ENCODE measurements at regions of chr10 and their contacts with region 1.

Region 1: DNA sequence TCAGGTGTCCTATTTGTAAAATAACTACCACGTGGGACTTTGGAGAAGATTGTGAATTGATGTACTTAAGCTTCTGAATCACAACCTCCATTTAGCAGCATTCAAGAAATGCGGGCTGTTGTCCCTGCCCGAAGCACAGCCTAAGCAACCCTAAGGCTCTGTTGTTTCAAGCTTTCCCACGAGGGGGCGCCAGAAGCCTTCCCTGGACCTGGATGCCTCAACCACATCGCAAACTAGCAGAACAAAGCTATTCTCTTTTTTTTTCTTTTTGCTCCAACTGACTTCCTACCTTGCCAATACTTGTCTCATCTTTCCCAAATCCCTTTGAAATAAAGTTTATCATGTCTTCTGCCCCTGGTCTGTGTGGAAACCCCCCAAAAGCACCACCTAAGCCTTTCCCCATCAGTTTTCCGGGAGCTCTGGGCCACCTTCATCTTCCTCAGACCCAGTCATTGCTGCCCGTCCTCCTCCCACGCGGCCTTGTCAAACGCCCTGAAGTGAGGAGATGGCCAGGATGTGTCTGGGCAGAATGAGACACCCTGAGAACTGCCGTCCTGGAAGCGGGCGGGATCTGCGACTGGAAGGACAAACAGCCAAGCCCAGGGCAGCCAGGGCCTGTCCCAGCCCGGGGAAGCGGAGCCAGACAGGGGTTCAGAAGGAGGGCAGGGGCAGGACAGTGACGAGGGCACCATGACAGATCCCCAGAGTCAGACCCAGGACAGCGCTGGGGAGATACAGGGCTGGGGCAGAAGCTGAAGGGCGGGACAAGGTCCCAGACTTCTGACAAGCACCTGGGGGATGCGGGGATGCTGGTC is 112.7 kb downstream of the SLIT1 start:
- DNase-seq: peak; percentile 79
- H3K4me3 Mint-ChIP-seq: no peak overlapping the region
- H3K27ac Mint-ChIP-seq: no peak overlapping the region
- H3K4me1 Mint-ChIP-seq: peaks cover 5% of the 10 kb centered on the region
- H3K27me3 Mint-ChIP-seq: peaks cover 35% of the 10 kb centered on the region
- CTCF ChIP-seq: peak; percentile 94

Region 2: DNA sequence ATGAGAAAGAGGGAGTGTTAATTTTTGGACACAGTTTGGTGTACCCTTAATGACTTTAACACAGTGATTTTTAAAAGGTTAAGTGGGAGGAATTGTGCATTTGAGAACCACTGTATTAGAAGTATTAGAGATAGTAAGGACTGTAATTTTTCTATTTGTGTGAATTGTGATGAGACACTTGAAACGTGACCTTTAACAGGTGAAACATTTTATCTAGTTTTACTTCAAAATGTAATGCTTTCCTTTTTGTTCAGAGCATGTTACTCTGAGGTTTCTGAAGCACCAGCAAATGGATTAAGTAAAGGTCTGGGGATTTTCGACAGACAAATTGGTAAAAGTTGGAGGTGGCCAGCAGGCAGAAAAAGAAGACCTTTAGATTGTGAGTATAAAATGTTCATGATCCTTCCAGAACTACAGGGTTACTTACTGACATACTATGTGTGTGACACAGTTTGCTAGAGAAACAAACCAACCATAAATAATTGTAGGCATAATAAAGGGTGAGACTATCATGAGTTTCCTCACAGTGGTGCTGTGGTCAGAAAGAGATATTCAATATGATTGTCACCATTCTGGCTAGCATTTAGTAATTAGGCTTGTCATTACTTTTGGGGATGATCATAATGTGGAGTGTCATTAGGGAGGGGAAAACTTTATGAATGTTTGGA is 214.9 kb before region 1 on chr10:
- CTCF ChIA-PET with region 1: no interaction called
- POLR2A ChIA-PET with region 1: no interaction called
- intact Hi-C with region 1: no loop called
- DNase-seq: no peak
- H3K4me3 Mint-ChIP-seq: no peak overlapping the region
- H3K27ac Mint-ChIP-seq: peak overlapping the region; percentile 70
- H3K4me1 Mint-ChIP-seq: peaks cover 24% of the 10 kb centered on the region
- H3K27me3 Mint-ChIP-seq: no peaks in the 10 kb centered on the region
- CTCF ChIP-seq: no peak

Region 3: DNA sequence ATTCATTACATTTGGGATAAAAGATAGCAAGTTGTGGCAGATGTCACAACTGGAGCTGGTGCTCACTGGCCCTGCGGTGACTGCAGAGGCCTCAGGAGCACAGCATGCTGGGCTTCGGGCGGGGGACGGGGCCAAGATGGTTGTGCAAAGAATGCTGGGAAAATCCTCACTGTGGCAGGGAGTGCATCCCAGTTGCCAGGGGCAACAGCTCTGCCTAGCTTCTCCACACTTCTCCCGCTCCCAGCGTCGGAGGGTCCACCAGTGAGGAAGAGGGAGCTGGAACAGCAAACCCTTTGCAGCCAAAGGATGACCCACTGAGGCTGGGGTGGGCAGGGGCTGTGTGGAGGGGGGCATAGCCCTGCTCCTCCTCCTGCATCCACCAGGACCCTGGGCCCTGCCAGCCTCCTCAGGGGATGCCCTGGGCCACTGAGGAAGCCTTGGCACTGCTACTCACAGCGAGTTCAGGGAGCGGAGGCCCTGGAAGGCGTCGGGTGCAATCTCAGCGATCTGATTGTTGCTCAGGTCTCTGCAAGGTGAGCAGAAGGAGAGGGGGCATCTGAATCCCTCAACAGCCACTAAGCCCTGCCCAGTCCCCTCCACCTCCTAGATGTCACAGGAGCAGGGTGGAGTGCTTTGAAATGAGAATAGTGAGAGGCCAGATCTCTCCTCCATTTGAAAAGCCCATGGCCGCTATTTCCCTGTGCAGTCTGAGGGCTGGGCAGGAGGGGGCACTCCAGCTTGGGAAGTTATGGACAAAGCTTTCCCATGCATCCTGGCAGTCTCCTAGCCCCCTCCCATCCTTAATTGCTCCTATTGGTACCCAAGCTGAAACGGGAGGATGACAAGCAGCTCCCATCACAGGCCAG is 13.8 kb before region 1 on chr10:
- CTCF ChIA-PET with region 1: interaction called, 19 read pairs
- POLR2A ChIA-PET with region 1: no interaction called
- intact Hi-C with region 1: no loop called
- DNase-seq: no peak
- H3K4me3 Mint-ChIP-seq: no peak overlapping the region
- H3K27ac Mint-ChIP-seq: no peak overlapping the region
- H3K4me1 Mint-ChIP-seq: peaks cover 6% of the 10 kb centered on the region
- H3K27me3 Mint-ChIP-seq: peaks cover 7% of the 10 kb centered on the region
- CTCF ChIP-seq: no peak

Region 4: DNA sequence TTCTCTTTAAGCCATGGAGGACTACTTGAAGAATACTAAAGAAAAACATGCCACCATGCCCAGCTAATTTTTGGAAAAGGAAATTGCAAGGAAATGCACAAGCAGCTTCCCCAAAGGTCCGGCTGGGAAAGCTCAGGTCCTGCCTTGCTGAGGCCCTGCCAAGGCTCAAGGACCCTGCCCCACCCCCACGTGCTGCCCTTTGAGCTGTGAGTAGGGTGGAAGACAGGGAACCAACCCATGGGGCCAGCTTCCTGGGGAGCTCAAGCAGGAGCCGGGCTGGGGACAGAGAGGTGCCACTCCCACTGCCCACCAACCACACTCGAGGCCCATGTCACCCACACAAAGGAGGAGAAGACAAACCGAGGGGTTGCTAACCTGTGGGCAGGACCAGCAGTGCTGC is 34.5 kb after region 1 on chr10:
- CTCF ChIA-PET with region 1: interaction called, 10 read pairs
- POLR2A ChIA-PET with region 1: no interaction called
- intact Hi-C with region 1: no loop called
- DNase-seq: no peak
- H3K4me3 Mint-ChIP-seq: no peak overlapping the region
- H3K27ac Mint-ChIP-seq: no peak overlapping the region
- H3K4me1 Mint-ChIP-seq: no peaks in the 10 kb centered on the region
- H3K27me3 Mint-ChIP-seq: peaks cover 92% of the 10 kb centered on the region
- CTCF ChIP-seq: no peak

Region 5: GRCh38 chr10:97176226-97176625 is 103.2 kb after region 1 on chr10:
- CTCF ChIA-PET with region 1: interaction called, 15 read pairs
- POLR2A ChIA-PET with region 1: no interaction called
- intact Hi-C with region 1: no loop called
- DNase-seq: no peak
- H3K4me3 Mint-ChIP-seq: no peak overlapping the region
- H3K27ac Mint-ChIP-seq: no peak overlapping the region
- H3K4me1 Mint-ChIP-seq: no peaks in the 10 kb centered on the region
- H3K27me3 Mint-ChIP-seq: peaks cover 12% of the 10 kb centered on the region
- CTCF ChIP-seq: no peak

Region 6: DNA sequence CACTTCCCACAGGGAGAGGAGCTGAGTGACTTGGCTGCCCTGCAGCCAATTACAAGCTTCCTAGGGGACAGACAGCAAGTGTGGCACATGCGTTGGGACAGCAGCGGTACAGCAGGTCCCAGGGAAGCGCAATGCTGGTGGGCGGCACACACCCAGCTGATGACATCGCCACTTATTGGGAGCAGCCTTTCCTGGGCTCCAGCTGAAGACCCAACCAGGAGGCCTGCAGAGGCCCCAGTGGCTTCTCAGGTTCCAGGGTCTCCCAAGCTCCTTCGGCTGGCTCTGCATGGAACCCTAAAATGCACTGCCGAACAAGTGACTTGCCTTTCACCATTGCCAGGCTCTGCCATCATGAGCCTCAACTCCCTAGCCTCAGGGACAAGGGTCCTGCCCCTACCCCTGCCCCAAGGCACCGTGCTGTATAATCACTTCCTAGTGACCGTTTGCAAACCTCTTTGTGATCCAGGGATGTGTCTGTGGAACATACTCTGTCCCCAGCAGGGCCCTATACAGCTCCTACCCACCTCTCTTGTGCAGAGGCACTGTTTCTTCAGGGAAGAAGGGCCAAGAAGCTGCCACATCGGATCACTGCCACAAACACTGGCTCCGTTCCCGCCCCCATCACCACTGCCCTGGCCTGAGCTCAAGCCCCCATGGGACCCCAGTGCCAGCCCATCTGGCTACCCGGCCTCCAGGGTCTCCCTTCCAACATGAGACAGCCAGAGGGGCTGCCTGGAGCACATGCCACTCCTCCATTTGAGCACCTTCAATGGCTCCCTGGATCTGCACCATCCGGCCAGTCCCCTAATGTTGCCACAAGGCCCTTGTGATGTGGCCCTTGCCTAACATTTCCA is 132.0 kb after region 1 on chr10:
- CTCF ChIA-PET with region 1: interaction called, 179 read pairs
- POLR2A ChIA-PET with region 1: interaction called, 5 read pairs
- intact Hi-C with region 1: loop called (anchors 1 kb)
- DNase-seq: no peak
- H3K4me3 Mint-ChIP-seq: no peak overlapping the region
- H3K27ac Mint-ChIP-seq: no peak overlapping the region
- H3K4me1 Mint-ChIP-seq: no peaks in the 10 kb centered on the region
- H3K27me3 Mint-ChIP-seq: peaks cover 30% of the 10 kb centered on the region
- CTCF ChIP-seq: no peak

Region 7: GRCh38 chr10:97234400-97234799 is 161.3 kb after region 1 on chr10:
- CTCF ChIA-PET with region 1: interaction called, 34 read pairs
- POLR2A ChIA-PET with region 1: no interaction called
- intact Hi-C with region 1: loop called (anchors 1 kb)
- DNase-seq: peak; percentile 47
- H3K4me3 Mint-ChIP-seq: no peak overlapping the region
- H3K27ac Mint-ChIP-seq: no peak overlapping the region
- H3K4me1 Mint-ChIP-seq: no peaks in the 10 kb centered on the region
- H3K27me3 Mint-ChIP-seq: no peaks in the 10 kb centered on the region
- CTCF ChIP-seq: peak; percentile 57

Region 8: GRCh38 chr10:97659589-97659988 is 586.5 kb after region 1 on chr10:
- CTCF ChIA-PET with region 1: no interaction called
- POLR2A ChIA-PET with region 1: no interaction called
- intact Hi-C with region 1: no loop called
- DNase-seq: peak; percentile 48
- H3K4me3 Mint-ChIP-seq: no peak overlapping the region
- H3K27ac Mint-ChIP-seq: no peak overlapping the region
- H3K4me1 Mint-ChIP-seq: peaks cover 5% of the 10 kb centered on the region
- H3K27me3 Mint-ChIP-seq: no peaks in the 10 kb centered on the region
- CTCF ChIP-seq: no peak